Left ventricle myocardium inferior (tissue), 1 donor: ENCODE measurements at regions of chr3 and their contacts with region 1.

Region 1: DNA sequence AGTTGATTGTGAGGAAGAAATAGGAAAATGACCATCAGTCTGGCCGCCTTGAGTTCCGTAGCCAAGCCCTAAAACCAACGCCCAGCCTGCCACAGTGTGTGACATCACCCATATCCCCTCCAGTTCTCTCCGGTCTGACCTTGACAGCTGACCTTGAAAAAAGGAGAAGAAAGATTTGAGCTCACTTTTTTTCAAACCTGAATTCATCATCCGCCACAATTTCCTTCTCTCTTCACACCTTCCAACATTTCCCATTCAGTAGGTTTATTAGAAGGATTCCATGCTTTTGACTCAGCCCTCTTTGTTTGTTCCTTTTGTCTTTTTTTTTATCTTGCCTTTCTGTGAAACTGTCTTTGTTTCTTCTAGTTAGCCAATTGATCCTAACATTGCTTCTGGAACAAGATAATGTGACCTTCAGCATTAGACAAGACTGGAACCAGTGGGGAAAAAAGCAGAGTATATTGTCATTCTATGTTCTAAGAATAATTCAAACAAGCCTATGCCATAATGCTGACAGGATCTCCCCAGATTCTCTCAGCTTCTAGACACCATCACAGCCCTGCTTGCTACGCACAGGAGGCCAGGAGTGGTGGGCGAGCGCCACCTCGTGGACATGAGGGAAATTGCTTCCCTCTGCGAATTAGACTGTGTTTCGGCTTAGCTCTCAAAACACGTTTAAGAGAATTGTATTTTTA is 283.1 kb downstream of the FGF12 start:
- DNase-seq: peak; percentile 43
- H3K4me3 ChIP-seq: no peak overlapping the region
- H3K27ac ChIP-seq: no peak overlapping the region
- H3K4me1 ChIP-seq: peaks cover 39% of the 10 kb centered on the region
- H3K27me3 ChIP-seq: no peaks in the 10 kb centered on the region
- CTCF ChIP-seq: peak; percentile 100

Region 2: GRCh38 chr3:192130534-192131132 is 313.6 kb before region 1 on chr3:
- intact Hi-C with region 1: loop called (anchors 5 kb)
- DNase-seq: peak; percentile 21
- H3K4me3 ChIP-seq: no peak overlapping the region
- H3K27ac ChIP-seq: no peak overlapping the region
- H3K4me1 ChIP-seq: no peaks in the 10 kb centered on the region
- H3K27me3 ChIP-seq: no peaks in the 10 kb centered on the region
- CTCF ChIP-seq: peak; percentile 87

Region 3: GRCh38 chr3:192188218-192188835 is 255.9 kb before region 1 on chr3:
- intact Hi-C with region 1: loop called (anchors 10 kb)
- DNase-seq: peak; percentile 32
- H3K4me3 ChIP-seq: no peak overlapping the region
- H3K27ac ChIP-seq: no peak overlapping the region
- H3K4me1 ChIP-seq: peaks cover 17% of the 10 kb centered on the region
- H3K27me3 ChIP-seq: no peaks in the 10 kb centered on the region
- CTCF ChIP-seq: peak; percentile 66

Region 4: GRCh38 chr3:192284443-192285087 is 159.7 kb before region 1 on chr3:
- intact Hi-C with region 1: no loop called
- DNase-seq: no peak
- H3K4me3 ChIP-seq: no peak overlapping the region
- H3K27ac ChIP-seq: no peak overlapping the region
- H3K4me1 ChIP-seq: peaks cover 54% of the 10 kb centered on the region
- H3K27me3 ChIP-seq: no peaks in the 10 kb centered on the region
- CTCF ChIP-seq: no peak

Region 5: DNA sequence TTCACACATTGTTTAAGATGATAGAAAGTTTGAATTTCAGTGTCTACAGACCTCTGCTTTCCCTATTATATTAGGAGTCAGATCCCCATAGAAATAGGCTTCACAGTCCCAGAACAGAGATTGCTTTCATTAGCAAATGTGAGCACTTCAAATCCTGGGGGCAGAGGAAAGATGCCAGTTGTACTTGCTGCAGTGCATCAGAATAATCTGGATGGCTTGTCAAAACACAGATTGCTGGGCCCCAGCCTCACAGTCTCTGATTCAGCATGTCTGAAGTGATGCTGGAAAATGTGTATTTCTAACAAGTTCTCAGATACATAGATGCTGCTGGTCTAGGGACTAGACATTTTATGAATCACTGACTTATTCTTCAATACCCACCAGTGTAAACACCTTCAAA is 92.1 kb before region 1 on chr3:
- intact Hi-C with region 1: no loop called
- DNase-seq: no peak
- H3K4me3 ChIP-seq: no peak overlapping the region
- H3K27ac ChIP-seq: no peak overlapping the region
- H3K4me1 ChIP-seq: peaks cover 25% of the 10 kb centered on the region
- H3K27me3 ChIP-seq: no peaks in the 10 kb centered on the region
- CTCF ChIP-seq: no peak